AG04449 (cell line): ENCODE measurements at regions of chr9 and their contacts with region 1.

Region 1: DNA sequence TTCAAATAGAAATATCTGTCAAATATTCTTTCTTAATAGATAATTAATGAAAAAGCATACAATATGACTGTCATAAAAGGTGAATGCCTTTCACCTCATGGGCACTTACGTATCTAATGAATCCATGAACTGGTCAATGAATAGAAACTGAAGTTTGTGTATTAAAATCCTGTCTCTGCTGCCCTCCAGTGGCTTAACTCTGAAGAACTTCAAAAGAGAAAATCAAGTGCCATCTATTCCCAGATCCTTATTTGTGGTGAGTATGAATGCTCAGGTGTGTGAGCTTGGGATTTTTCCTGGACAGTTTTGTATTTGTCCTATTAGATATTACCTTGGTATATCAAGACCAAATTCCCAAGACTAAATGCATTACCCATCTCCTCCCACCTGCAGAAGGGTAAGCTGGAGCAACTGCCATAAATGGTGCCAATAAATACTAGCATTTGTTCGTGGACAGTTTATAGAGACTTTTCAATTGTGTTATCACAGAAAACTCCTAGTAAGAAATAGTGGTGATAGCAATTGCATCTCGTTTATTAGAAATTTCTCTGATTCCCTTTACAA is 44.0 kb upstream of the SVEP1 start:
- DNase-seq: no peak
- H3K4me3 ChIP-seq: no peak overlapping the region
- CTCF ChIP-seq: peak; percentile 27

Region 2: DNA sequence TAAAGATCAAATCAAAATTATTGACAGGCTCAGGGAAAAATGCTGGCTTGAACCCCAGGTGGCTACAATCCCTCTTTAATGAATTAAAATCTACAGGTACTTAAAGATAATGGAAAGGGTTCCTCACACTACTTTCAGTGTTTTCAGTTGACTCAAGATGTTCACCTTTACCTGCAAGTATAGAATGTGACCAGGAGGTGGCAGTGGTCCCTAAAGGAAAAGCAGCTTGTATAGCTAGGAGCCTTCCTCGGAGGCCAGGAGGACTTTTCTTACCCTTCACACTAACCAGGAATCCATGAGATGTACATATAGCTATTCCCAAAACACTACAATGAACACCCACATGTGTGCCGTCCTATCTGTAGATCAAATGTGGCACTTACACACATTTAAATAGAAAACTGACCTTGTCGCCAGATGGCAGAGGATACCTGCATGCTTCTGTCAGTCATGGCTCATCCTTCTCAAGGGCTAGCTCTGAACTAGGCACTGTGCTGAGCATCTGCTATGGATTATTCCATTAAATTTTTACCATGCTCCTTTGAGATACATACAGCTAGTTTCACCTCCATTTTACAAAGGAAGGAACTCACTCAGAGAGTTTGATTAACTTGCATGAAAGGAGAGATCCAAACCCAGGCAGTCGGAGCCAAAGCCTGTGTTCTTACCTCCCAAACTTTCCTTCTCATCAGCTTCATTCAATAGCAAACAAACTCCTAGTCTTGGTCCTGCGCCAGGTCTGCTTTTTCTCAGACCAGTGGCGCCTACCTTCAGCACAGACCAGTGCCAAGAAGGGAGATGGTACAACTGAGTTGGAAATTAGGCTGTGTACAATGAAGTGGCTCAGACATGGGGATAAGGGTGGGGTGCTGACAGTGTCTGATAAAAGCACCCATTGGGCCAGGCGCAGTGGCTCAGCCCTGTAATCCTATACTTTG is 440.1 kb before region 1 on chr9:
- CTCF ChIA-PET with region 1: interaction called, 30 read pairs
- POLR2A ChIA-PET with region 1: no interaction called
- DNase-seq: peak; percentile 12
- H3K4me3 ChIP-seq: no peak overlapping the region
- CTCF ChIP-seq: peak; percentile 74

Region 3: GRCh38 chr9:110340314-110340713 is 283.2 kb before region 1 on chr9:
- CTCF ChIA-PET with region 1: interaction called, 12 read pairs
- POLR2A ChIA-PET with region 1: no interaction called
- DNase-seq: no peak
- H3K4me3 ChIP-seq: no peak overlapping the region
- CTCF ChIP-seq: peak; percentile 26